Sigmoid colon (tissue), 7 donors: ENCODE measurements at regions of chr7 and their contacts with region 1.

Region 1: GRCh38 chr7:111992601-111993000 is 213.6 kb downstream of the DOCK4 start:
- DNase-seq: no peak
- H3K4me3 ChIP-seq: no peak overlapping the region
- H3K27ac ChIP-seq: peak overlapping the region in 2 of 4 donors; percentile 15 to 52
- H3K4me1 ChIP-seq: peaks cover 0 to 18% (median 8%) of the 10 kb centered on the region in 4 donors
- H3K27me3 ChIP-seq: no peaks in the 10 kb centered on the region
- CTCF ChIP-seq: no peak
- EP300 ChIP-seq: no peak
- POLR2A ChIP-seq: no peak

Region 2: GRCh38 chr7:112103246-112103645 is 110.6 kb after region 1 on chr7:
- intact Hi-C with region 1: loop called (anchors 10 kb)
- DNase-seq: no peak
- H3K4me3 ChIP-seq: no peak overlapping the region
- H3K27ac ChIP-seq: no peak overlapping the region
- H3K4me1 ChIP-seq: peaks cover 0 to 20% (median 10%) of the 10 kb centered on the region in 4 donors
- H3K27me3 ChIP-seq: no peaks in the 10 kb centered on the region
- CTCF ChIP-seq: no peak
- EP300 ChIP-seq: no peak
- POLR2A ChIP-seq: no peak

Region 3: DNA sequence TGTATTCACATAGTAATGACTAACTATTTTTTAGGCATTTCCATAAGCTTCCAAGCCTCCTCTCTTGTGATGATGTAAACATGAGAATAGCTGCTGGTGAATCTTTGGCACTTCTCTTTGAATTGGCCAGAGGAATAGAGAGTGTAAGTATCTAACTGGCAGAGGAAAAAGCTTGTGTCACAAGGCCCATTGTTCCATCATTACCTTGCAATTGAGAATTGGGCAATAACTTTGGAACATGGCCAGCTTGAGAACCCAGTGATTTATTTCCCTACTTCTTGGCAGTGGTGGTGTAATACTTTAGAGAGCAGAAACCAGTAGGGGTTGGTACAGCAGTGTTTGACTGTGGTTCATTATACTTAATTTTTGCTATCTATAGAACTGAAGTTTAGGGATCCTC is 469.6 kb after region 1 on chr7:
- intact Hi-C with region 1: no loop called
- DNase-seq: no peak
- H3K4me3 ChIP-seq: no peak overlapping the region
- H3K27ac ChIP-seq: peak overlapping the region in 3 of 4 donors; percentile 36 to 51 (median 50)
- H3K4me1 ChIP-seq: peaks cover 0 to 42% (median 10%) of the 10 kb centered on the region in 4 donors
- H3K27me3 ChIP-seq: no peaks in the 10 kb centered on the region
- CTCF ChIP-seq: no peak
- EP300 ChIP-seq: peak in 2 of 4 donors; percentile 52 to 59
- POLR2A ChIP-seq: no peak